ENCODE measurements at regions of chr2 and their contacts with region 1.

Region 1: GRCh38 chr2:88627056-88627855 is at the start of gene EIF2AK3:
- DNase-seq: peak; percentile 96 to 100 (median 98)
- ATAC-seq: peak; percentile 94
- H3K4me3 ChIP-seq: peak within 1 kb of the TSS; percentile 90
- H3K27ac ChIP-seq: peak within 1 kb of the TSS; percentile 98
- H3K4me1 ChIP-seq: peaks cover 16 to 22% of the 10 kb centered on the region in 2 experiments; a peak in 4 of 5 replicates
- H3K27me3 ChIP-seq: no peaks in the 10 kb centered on the region
- CTCF ChIP-seq: peak in 1 of 3 experiments; percentile 10; a peak in 1 of 6 replicates
- EP300 ChIP-seq: no peak
- POLR2A ChIP-seq: peak; percentile 73
- RAD21 ChIP-seq: no peak
- polyA plus RNA-seq, gene EIF2AK3: 1.7 to 2.2 TPM

Region 2: GRCh38 chr2:88416016-88416680 is 211.1 kb before region 1 on chr2:
- CTCF ChIA-PET with region 1: no interaction called
- POLR2A ChIA-PET with region 1: no interaction called
- in situ Hi-C with region 1: no loop called
- intact Hi-C with region 1: no loop called
- DNase-seq: no peak
- ATAC-seq: no peak
- H3K4me3 ChIP-seq: no peak overlapping the region
- H3K27ac ChIP-seq: no peak overlapping the region
- H3K4me1 ChIP-seq: no peaks in the 10 kb centered on the region
- H3K27me3 ChIP-seq: peaks cover 12 to 30% of the 10 kb centered on the region in 2 experiments; a peak in 4 of 5 replicates
- CTCF ChIP-seq: no peak
- EP300 ChIP-seq: no peak
- POLR2A ChIP-seq: no peak
- RAD21 ChIP-seq: no peak

Region 3: DNA sequence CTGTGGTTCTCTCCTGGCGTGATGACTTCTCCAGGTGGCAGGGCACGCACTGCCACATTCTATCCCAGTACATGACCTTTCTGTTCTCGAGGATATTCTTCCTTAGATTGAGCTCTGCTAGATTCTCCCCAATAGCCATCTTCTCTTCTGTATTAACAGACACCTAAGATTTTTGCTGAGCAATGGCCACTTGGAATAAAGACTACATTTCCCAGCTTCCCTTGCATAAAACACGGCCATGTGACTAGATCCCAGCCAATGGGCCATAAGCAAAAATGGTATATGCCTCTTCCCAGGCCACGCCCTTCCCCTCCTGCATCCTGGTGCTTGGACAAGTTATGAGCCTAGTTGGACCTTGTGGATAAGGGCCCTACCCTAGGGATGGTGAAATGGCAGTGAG is 82.1 kb before region 1 on chr2:
- CTCF ChIA-PET with region 1: no interaction called
- POLR2A ChIA-PET with region 1: no interaction called
- in situ Hi-C with region 1: no loop called
- intact Hi-C with region 1: no loop called
- DNase-seq: peak; percentile 76 to 83 (median 81)
- ATAC-seq: peak; percentile 98
- H3K4me3 ChIP-seq: no peak overlapping the region
- H3K27ac ChIP-seq: no peak overlapping the region
- H3K4me1 ChIP-seq: peaks cover 2 to 6% of the 10 kb centered on the region in 2 experiments; a peak in 3 of 5 replicates
- H3K27me3 ChIP-seq: peaks cover 8 to 12% of the 10 kb centered on the region in 2 experiments; a peak in 4 of 5 replicates
- CTCF ChIP-seq: no peak
- EP300 ChIP-seq: no peak
- POLR2A ChIP-seq: no peak
- RAD21 ChIP-seq: no peak

Region 4: DNA sequence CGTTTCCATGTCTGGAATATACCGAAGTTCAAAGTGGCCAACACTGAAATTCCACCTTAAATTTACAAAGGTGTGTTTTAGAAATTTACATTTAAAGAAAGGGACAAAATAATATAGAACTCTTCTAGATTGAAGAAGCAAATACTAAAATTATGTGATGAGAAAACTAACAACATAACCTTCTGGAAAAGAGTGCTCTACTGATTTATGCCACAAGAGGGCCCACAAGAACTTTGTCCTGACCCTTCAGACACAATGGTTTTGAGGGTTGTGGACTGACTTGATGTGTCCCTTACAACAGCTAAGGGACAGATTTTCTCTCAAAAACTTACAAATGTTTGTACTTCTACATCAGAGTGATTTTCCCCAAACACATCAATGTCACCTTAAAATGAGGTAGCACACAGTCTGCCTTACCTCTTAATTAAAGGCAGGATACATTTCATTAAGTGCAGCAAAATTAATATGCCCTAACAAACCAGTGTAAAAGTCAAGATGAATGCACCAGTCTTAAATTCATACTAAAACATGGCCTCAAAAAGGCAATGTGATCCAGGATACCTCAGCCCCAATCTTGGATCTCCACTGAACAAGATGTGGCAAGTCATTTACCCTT is 36.1 kb before region 1 on chr2:
- CTCF ChIA-PET with region 1: no interaction called
- POLR2A ChIA-PET with region 1: interaction called, 3 read pairs
- in situ Hi-C with region 1: no loop called
- intact Hi-C with region 1: loop called (anchors 5 kb)
- DNase-seq: peak; percentile 56 to 68 (median 60)
- ATAC-seq: peak; percentile 90
- H3K4me3 ChIP-seq: no peak overlapping the region
- H3K27ac ChIP-seq: no peak overlapping the region
- H3K4me1 ChIP-seq: no peaks in the 10 kb centered on the region
- H3K27me3 ChIP-seq: no peaks in the 10 kb centered on the region
- CTCF ChIP-seq: peak; percentile 72 to 89 (median 73); a peak in 5 of 6 replicates
- EP300 ChIP-seq: no peak
- POLR2A ChIP-seq: no peak
- RAD21 ChIP-seq: peak; percentile 80 to 92

Region 5: GRCh38 chr2:88606371-88607030 is 20.8 kb before region 1 on chr2:
- CTCF ChIA-PET with region 1: no interaction called
- POLR2A ChIA-PET with region 1: interaction called, 16 read pairs
- in situ Hi-C with region 1: no loop called
- intact Hi-C with region 1: no loop called
- DNase-seq: no peak
- ATAC-seq: no peak
- H3K4me3 ChIP-seq: no peak overlapping the region
- H3K27ac ChIP-seq: no peak overlapping the region
- H3K4me1 ChIP-seq: peaks cover under 1 to 7% of the 10 kb centered on the region in 2 experiments; a peak in 3 of 5 replicates
- H3K27me3 ChIP-seq: no peaks in the 10 kb centered on the region
- CTCF ChIP-seq: no peak
- EP300 ChIP-seq: no peak
- POLR2A ChIP-seq: no peak
- RAD21 ChIP-seq: no peak

Region 6: GRCh38 chr2:88639865-88640264 is 12.6 kb after region 1 on chr2:
- CTCF ChIA-PET with region 1: no interaction called
- POLR2A ChIA-PET with region 1: interaction called, 11 read pairs
- in situ Hi-C with region 1: no loop called
- intact Hi-C with region 1: no loop called
- DNase-seq: no peak
- ATAC-seq: no peak
- H3K4me3 ChIP-seq: no peak overlapping the region
- H3K27ac ChIP-seq: no peak overlapping the region
- H3K4me1 ChIP-seq: peaks cover 0 to 5% of the 10 kb centered on the region in 2 experiments; a peak in 1 of 5 replicates
- H3K27me3 ChIP-seq: no peaks in the 10 kb centered on the region
- CTCF ChIP-seq: no peak
- EP300 ChIP-seq: no peak
- POLR2A ChIP-seq: no peak
- RAD21 ChIP-seq: no peak

Region 7: GRCh38 chr2:88651660-88652059 is 24.4 kb after region 1 on chr2:
- CTCF ChIA-PET with region 1: no interaction called
- POLR2A ChIA-PET with region 1: interaction called, 10 read pairs
- in situ Hi-C with region 1: no loop called
- intact Hi-C with region 1: no loop called
- DNase-seq: no peak
- ATAC-seq: no peak
- H3K4me3 ChIP-seq: no peak overlapping the region
- H3K27ac ChIP-seq: no peak overlapping the region
- H3K4me1 ChIP-seq: no peaks in the 10 kb centered on the region
- H3K27me3 ChIP-seq: no peaks in the 10 kb centered on the region
- CTCF ChIP-seq: no peak
- EP300 ChIP-seq: no peak
- POLR2A ChIP-seq: no peak
- RAD21 ChIP-seq: no peak

Region 8: GRCh38 chr2:88669371-88670214 is 42.3 kb after region 1 on chr2:
- CTCF ChIA-PET with region 1: interaction called, 3 read pairs
- POLR2A ChIA-PET with region 1: no interaction called
- in situ Hi-C with region 1: no loop called
- intact Hi-C with region 1: loop called (anchors 5 kb)
- DNase-seq: peak; percentile 41 to 48 (median 46)
- ATAC-seq: peak; percentile 60; the same call in 2 of the 3 replicates
- H3K4me3 ChIP-seq: no peak overlapping the region
- H3K27ac ChIP-seq: no peak overlapping the region
- H3K4me1 ChIP-seq: peaks cover 3 to 15% of the 10 kb centered on the region in 2 experiments; a peak in 4 of 5 replicates
- H3K27me3 ChIP-seq: no peaks in the 10 kb centered on the region
- CTCF ChIP-seq: peak; percentile 53 to 77 (median 59)
- EP300 ChIP-seq: no peak
- POLR2A ChIP-seq: no peak
- RAD21 ChIP-seq: peak; percentile 77 to 83

Region 9: GRCh38 chr2:88724643-88725332 is 97.5 kb after region 1 on chr2:
- CTCF ChIA-PET with region 1: no interaction called
- POLR2A ChIA-PET with region 1: no interaction called
- in situ Hi-C with region 1: no loop called
- intact Hi-C with region 1: no loop called
- DNase-seq: no peak
- ATAC-seq: peak; percentile 31; the same call in 1 of the 3 replicates
- H3K4me3 ChIP-seq: no peak overlapping the region
- H3K27ac ChIP-seq: no peak overlapping the region
- H3K4me1 ChIP-seq: peaks cover 3 to 5% of the 10 kb centered on the region in 2 experiments; a peak in 3 of 5 replicates
- H3K27me3 ChIP-seq: no peaks in the 10 kb centered on the region
- CTCF ChIP-seq: no peak
- EP300 ChIP-seq: no peak
- POLR2A ChIP-seq: no peak
- RAD21 ChIP-seq: no peak